ENCODE measurements at regions of chr12 and their contacts with region 1.

Region 1: GRCh38 chr12:94101738-94102660 is 46.4 kb upstream of the PLXNC1 start:
- H3K4me3 ChIP-seq: peak overlapping the region; percentile 42
- H3K27ac ChIP-seq: peak overlapping the region; percentile 60; the same call in 1 of the 2 replicates
- H3K4me1 ChIP-seq: no peaks in the 10 kb centered on the region
- CTCF ChIP-seq: peak; percentile 85

Region 2: GRCh38 chr12:93494096-93494495 is 607.9 kb before region 1 on chr12:
- CTCF ChIA-PET with region 1: interaction called, 18 read pairs
- POLR2A ChIA-PET with region 1: no interaction called
- H3K4me3 ChIP-seq: no peak overlapping the region
- H3K27ac ChIP-seq: no peak overlapping the region
- H3K4me1 ChIP-seq: no peaks in the 10 kb centered on the region
- CTCF ChIP-seq: no peak

Region 3: GRCh38 chr12:93514853-93515252 is 587.1 kb before region 1 on chr12:
- CTCF ChIA-PET with region 1: interaction called, 24 read pairs
- POLR2A ChIA-PET with region 1: no interaction called
- H3K4me3 ChIP-seq: no peak overlapping the region
- H3K27ac ChIP-seq: no peak overlapping the region
- H3K4me1 ChIP-seq: no peaks in the 10 kb centered on the region
- CTCF ChIP-seq: no peak

Region 4: GRCh38 chr12:93742110-93742934 is 359.7 kb before region 1 on chr12:
- CTCF ChIA-PET with region 1: interaction called, 15 read pairs
- POLR2A ChIA-PET with region 1: no interaction called
- H3K4me3 ChIP-seq: peak overlapping the region; percentile 62
- H3K27ac ChIP-seq: peak overlapping the region; percentile 51
- H3K4me1 ChIP-seq: peaks cover 3% of the 10 kb centered on the region; the same call in 1 of the 2 replicates
- CTCF ChIP-seq: peak; percentile 38; the same call in 1 of the 2 replicates

Region 5: GRCh38 chr12:93938931-93939330 is 163.1 kb before region 1 on chr12:
- CTCF ChIA-PET with region 1: interaction called, 10 read pairs
- POLR2A ChIA-PET with region 1: no interaction called
- H3K4me3 ChIP-seq: no peak overlapping the region
- H3K27ac ChIP-seq: no peak overlapping the region
- H3K4me1 ChIP-seq: no peaks in the 10 kb centered on the region
- CTCF ChIP-seq: no peak

Region 6: DNA sequence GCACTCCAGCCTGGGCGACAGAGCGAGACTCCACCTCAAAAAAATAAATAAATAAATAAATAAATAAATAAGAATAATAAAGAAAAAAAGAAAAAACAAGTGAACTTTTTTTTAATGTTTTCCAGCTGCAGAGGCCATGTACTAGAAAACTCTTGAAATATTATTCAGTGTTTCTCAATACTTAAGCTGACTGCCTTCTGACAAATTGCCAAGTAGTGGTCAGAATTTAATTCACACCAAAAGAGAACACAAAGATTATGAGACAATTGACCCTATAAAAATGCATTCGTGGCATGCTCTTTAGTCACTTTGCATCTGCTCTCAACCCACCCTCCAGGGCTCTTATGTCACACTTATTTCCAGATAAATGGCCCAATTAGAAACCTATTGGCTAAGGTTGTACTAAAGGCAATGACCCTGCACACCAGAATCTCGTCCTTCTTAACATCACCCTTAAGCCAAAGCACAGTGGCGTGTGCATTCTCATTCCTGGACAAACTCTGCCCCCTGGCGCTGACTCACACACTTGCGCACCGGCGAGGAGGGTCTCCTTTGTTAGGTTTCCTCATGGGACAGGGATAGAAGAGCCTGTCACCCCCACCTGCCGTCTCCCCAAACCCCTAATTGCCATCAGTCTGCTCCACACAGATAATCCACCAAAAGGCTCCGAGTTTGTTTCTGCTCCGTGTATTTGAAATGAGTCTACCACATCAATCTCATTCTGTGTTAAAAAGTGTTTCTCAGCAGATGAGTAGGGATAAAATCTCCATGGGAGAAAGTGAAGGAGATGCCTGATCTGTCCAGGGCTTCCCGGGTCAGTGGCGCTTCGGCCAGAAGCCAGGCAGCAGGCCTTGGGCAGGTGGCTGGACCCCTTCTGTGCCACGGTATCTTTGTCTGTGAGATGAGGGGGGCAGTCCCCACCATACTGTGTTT is 430.8 kb after region 1 on chr12:
- CTCF ChIA-PET with region 1: interaction called, 11 read pairs
- POLR2A ChIA-PET with region 1: no interaction called
- H3K4me3 ChIP-seq: no peak overlapping the region
- H3K27ac ChIP-seq: no peak overlapping the region
- H3K4me1 ChIP-seq: no peaks in the 10 kb centered on the region
- CTCF ChIP-seq: peak; percentile 84